ENCODE measurements at regions of chr3 and their contacts with region 1.

Region 1: GRCh38 chr3:151168269-151169094 is 34.5 kb downstream of the GPR171 start:
- DNase-seq: no peak
- H3K4me3 ChIP-seq: no peak overlapping the region
- CTCF ChIP-seq: peak; percentile 86

Region 2: GRCh38 chr3:151183265-151183671 is 14.8 kb after region 1 on chr3:
- CTCF ChIA-PET with region 1: interaction called, 14 read pairs
- POLR2A ChIA-PET with region 1: no interaction called
- DNase-seq: no peak
- H3K4me3 ChIP-seq: no peak overlapping the region
- CTCF ChIP-seq: no peak

Region 3: GRCh38 chr3:151227807-151228665 is 59.6 kb after region 1 on chr3:
- CTCF ChIA-PET with region 1: interaction called, 52 read pairs
- POLR2A ChIA-PET with region 1: no interaction called
- DNase-seq: no peak
- H3K4me3 ChIP-seq: no peak overlapping the region
- CTCF ChIP-seq: peak; percentile 83

Region 4: DNA sequence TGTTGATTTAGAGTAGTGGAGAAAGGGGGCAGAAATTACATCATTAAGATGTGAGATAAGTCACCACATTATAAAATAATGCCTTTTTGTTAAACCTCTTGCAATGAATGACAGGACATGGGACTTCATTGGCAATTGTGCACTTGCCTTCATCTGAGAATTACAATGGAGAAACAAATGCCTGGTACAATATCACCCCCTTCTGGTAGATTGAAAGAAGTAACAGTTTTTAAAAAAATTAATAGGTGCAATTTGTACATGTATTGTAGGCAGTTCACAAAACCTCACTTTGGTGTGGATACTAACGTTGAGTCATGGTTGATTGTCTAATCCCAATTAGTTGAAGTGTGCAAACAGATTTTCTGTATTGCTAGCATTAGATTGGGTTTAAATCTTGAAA is 114.4 kb after region 1 on chr3:
- CTCF ChIA-PET with region 1: interaction called, 310 read pairs
- POLR2A ChIA-PET with region 1: no interaction called
- DNase-seq: no peak
- H3K4me3 ChIP-seq: no peak overlapping the region
- CTCF ChIP-seq: peak; percentile 35

Region 5: DNA sequence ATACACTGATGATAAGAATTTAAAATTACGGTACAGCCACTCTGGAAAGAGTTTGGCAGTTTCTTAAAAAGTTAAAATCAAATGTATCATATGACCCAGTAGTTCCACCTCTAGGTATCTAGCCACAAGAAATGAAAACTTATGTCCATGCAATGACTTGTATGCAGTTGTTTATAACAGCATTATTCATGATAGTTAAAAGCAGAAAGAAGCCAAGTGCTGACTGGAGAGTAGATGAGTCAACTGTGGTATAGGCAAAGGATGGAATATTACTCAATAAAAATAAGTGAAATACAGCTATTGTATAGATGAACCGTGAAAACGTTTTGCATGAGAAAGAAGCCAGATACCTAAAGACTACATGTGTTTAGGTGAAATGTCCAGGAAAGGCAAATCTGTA is 133.3 kb after region 1 on chr3:
- CTCF ChIA-PET with region 1: interaction called, 11 read pairs
- POLR2A ChIA-PET with region 1: no interaction called
- DNase-seq: no peak
- H3K4me3 ChIP-seq: no peak overlapping the region
- CTCF ChIP-seq: no peak

Measured in AG04449 (cell line).